Mammary epithelial cell (primary cell): ENCODE measurements at regions of chr9 and their contacts with region 1.

Region 1: DNA sequence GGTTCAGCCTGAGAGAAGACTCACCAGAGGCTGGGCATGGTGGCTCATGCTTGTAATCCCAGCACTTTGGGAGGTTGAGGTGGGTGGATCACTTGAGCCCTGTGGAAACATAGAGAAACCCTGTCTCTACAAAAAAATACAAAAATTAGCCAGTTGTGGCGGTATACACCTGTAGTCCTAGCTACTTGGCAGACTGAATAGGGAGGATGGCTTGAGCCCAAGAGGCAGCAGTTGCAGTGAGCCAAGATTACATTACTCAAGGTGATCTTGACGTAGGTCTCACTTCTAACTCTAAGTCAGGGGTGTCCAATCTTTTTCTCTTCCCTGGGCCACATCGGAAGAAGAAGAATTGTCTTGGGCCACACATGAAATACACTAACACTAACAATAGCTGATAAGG is 16.2 kb upstream of the ATP6V1G1 start:
- DNase-seq: no peak
- H3K4me3 ChIP-seq: no peak overlapping the region
- H3K27ac ChIP-seq: no peak overlapping the region
- H3K4me1 ChIP-seq: no peaks in the 10 kb centered on the region
- H3K27me3 ChIP-seq: no peaks in the 10 kb centered on the region
- CTCF ChIP-seq: no peak

Region 2: DNA sequence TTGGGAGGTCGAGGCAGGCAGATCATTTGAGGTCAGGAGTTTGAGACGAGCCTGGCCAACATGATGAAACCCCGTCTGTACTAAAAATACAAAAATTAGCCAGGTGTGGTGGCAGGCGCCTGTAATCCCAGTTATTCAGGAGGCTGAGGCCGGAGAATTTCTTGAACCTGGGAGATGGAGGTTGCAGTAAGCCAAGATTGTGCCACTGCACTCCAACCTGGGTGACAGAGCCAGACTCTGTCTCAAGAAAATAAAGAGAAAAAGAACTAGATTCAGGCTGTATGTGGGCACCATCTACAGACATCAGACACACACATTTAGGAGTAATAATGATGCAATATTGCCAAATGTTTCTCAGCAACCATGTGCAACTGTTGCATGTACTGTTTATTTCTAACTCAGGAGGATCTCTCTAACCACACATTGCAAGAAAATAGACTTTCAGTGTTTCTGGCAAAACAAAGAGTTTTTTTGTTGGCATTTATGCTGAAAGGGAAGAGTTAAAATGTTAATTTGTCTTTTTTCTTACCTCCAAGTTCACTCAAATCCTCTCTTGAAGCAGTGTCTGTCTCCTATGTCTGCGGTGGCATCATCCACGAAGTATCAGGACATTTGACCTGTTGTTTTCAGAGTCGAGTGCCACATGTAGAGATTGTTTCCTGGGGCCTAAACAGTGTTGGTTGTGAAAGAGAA is 253.6 kb before region 1 on chr9:
- CTCF ChIA-PET with region 1: no interaction called
- dilution Hi-C with region 1: no loop called
- in situ Hi-C with region 1: no loop called
- intact Hi-C with region 1: loop called (anchors 2 kb)
- DNase-seq: no peak
- H3K4me3 ChIP-seq: no peak overlapping the region
- H3K27ac ChIP-seq: no peak overlapping the region
- H3K4me1 ChIP-seq: no peaks in the 10 kb centered on the region
- H3K27me3 ChIP-seq: no peaks in the 10 kb centered on the region
- CTCF ChIP-seq: no peak